ENCODE measurements at regions of chr6 and their contacts with region 1.

Region 1: GRCh38 chr6:116010790-116011401 is 49.8 kb downstream of the FRK start:
- DNase-seq: peak; percentile 75
- ATAC-seq: peak; percentile 62
- H3K4me3 ChIP-seq: no peak overlapping the region
- H3K27ac ChIP-seq: no peak overlapping the region
- H3K4me1 ChIP-seq: peaks cover 9% of the 10 kb centered on the region
- H3K27me3 ChIP-seq: no peaks in the 10 kb centered on the region
- CTCF ChIP-seq: peak; percentile 80
- POLR2A ChIP-seq: no peak
- RAD21 ChIP-seq: peak; percentile 79

Region 2: GRCh38 chr6:115613488-115613887 is 397.4 kb before region 1 on chr6:
- CTCF ChIA-PET with region 1: no interaction called
- POLR2A ChIA-PET with region 1: no interaction called
- dilution Hi-C with region 1: no loop called
- in situ Hi-C with region 1: no loop called
- intact Hi-C with region 1: loop called (anchors 10 kb)
- DNase-seq: peak; percentile 94
- ATAC-seq: peak; percentile 89
- H3K4me3 ChIP-seq: no peak overlapping the region
- H3K27ac ChIP-seq: no peak overlapping the region
- H3K4me1 ChIP-seq: peaks cover 4% of the 10 kb centered on the region
- H3K27me3 ChIP-seq: no peaks in the 10 kb centered on the region
- CTCF ChIP-seq: no peak
- POLR2A ChIP-seq: no peak
- RAD21 ChIP-seq: no peak

Region 3: GRCh38 chr6:115896538-115897129 is 114.3 kb before region 1 on chr6:
- CTCF ChIA-PET with region 1: no interaction called
- POLR2A ChIA-PET with region 1: no interaction called
- dilution Hi-C with region 1: no loop called
- in situ Hi-C with region 1: no loop called
- intact Hi-C with region 1: no loop called
- DNase-seq: peak; percentile 29
- ATAC-seq: peak; percentile 77
- H3K4me3 ChIP-seq: no peak overlapping the region
- H3K27ac ChIP-seq: no peak overlapping the region
- H3K4me1 ChIP-seq: no peaks in the 10 kb centered on the region
- H3K27me3 ChIP-seq: no peaks in the 10 kb centered on the region
- CTCF ChIP-seq: peak; percentile 79
- POLR2A ChIP-seq: no peak
- RAD21 ChIP-seq: peak; percentile 76

Region 4: DNA sequence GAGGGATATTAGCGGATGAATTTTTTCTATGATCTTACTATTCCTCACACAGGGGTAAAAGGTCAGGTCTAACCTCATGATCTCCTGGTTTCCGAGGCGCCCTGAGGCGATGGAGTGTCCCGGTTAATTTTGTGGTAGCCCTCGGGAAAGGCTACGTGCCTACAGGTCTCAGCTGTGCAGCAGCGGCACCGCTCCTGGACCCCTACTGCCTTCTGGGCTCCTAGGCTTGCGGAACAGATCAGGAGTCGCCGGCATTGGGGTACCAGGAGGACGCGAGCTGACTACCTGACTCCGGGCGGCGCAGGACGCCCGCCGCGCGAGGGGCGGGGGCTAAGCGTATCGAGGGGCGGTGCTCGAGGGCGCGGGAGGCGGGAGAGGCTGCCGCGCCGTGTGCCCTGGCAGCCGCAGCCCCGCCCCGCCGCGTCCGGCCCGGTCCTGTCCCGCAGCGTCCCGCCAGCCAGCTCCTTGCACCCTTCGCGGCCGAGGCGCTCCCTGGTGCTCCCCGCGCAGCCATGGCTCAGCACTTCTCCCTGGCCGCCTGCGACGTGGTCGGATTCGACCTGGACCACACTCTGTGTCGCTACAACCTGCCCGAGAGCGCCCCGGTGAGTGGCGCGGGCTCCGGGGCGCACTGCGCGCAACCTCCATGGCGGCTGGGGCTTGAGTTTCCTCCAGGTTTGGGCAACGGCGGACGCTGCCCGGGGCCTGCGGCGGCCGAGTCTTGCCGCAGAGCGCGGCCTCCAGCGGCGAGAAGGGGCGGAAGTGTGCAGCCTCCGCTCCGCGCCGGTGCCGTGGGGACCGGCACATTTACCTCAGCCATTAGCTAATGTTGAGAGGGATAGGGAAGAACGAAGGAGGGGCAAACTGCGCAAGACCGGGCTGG is 89.8 kb after region 1 on chr6 and contains the start of gene NT5DC1:
- CTCF ChIA-PET with region 1: interaction called, 13 read pairs
- POLR2A ChIA-PET with region 1: interaction called, 4 read pairs
- dilution Hi-C with region 1: no loop called
- in situ Hi-C with region 1: loop called (anchors 5 kb)
- intact Hi-C with region 1: loop called (anchors 1 kb)
- DNase-seq: peak; percentile 67
- ATAC-seq: peak; percentile 96
- H3K4me3 ChIP-seq: peak within 1 kb of the TSS; percentile 89
- H3K27ac ChIP-seq: peak within 1 kb of the TSS; percentile 73
- H3K4me1 ChIP-seq: peaks cover 13% of the 10 kb centered on the region
- H3K27me3 ChIP-seq: no peaks in the 10 kb centered on the region
- CTCF ChIP-seq: no peak; the same call in none of the 2 replicates
- POLR2A ChIP-seq: no peak; the same call in 1 of the 2 replicates
- RAD21 ChIP-seq: peak; percentile 22; the same call in 1 of the 2 replicates
- total RNA-seq, gene NT5DC1: 7.5 and 11.7 TPM in 2 replicates

Region 5: GRCh38 chr6:116111552-116112528 is 100.9 kb after region 1 on chr6:
- CTCF ChIA-PET with region 1: interaction called, 14 read pairs
- POLR2A ChIA-PET with region 1: no interaction called
- dilution Hi-C with region 1: no loop called
- in situ Hi-C with region 1: no loop called
- intact Hi-C with region 1: no loop called
- DNase-seq: peak; percentile 44
- ATAC-seq: peak; percentile 61
- H3K4me3 ChIP-seq: no peak overlapping the region
- H3K27ac ChIP-seq: no peak overlapping the region
- H3K4me1 ChIP-seq: peaks cover 2% of the 10 kb centered on the region
- H3K27me3 ChIP-seq: no peaks in the 10 kb centered on the region
- CTCF ChIP-seq: peak; percentile 50
- POLR2A ChIP-seq: no peak
- RAD21 ChIP-seq: peak; percentile 39

Region 6: DNA sequence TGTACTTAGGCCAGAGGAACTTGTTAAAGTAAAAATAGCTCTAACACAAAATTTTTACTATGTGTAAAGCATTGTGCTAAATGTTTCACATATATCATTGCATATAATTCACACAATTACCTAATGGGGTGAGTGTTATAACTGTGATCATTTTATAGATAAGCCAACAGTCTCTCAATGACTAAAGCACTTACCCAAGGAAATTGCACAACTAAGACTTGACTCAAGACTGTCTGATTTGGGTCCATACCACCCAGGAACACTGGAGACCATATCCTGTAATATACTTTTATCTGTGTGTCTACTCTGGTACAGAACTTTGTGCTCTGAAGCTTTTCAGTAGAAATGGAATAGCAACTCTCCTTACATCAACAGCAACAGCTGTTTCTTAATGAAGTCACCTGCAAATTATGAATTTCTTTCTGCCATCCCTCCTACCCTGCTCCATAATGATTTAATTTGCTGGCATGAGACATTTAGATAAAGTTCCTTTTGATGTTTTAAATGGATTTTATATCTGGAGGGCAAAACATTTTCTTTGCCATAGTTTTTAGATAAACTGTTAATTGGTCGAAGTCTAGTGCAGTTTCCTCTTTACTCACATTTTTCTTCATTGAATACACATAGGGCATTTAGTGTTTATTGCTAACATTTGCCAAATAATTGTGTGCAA is 195.5 kb after region 1 on chr6:
- CTCF ChIA-PET with region 1: no interaction called
- POLR2A ChIA-PET with region 1: no interaction called
- dilution Hi-C with region 1: no loop called
- in situ Hi-C with region 1: no loop called
- intact Hi-C with region 1: loop called (anchors 10 kb)
- DNase-seq: no peak
- ATAC-seq: no peak
- H3K4me3 ChIP-seq: no peak overlapping the region
- H3K27ac ChIP-seq: no peak overlapping the region
- H3K4me1 ChIP-seq: peaks cover 9% of the 10 kb centered on the region
- H3K27me3 ChIP-seq: no peaks in the 10 kb centered on the region
- CTCF ChIP-seq: no peak
- POLR2A ChIP-seq: no peak
- RAD21 ChIP-seq: no peak